ENCODE measurements at regions of chr22 and their contacts with region 1.

Region 1: DNA sequence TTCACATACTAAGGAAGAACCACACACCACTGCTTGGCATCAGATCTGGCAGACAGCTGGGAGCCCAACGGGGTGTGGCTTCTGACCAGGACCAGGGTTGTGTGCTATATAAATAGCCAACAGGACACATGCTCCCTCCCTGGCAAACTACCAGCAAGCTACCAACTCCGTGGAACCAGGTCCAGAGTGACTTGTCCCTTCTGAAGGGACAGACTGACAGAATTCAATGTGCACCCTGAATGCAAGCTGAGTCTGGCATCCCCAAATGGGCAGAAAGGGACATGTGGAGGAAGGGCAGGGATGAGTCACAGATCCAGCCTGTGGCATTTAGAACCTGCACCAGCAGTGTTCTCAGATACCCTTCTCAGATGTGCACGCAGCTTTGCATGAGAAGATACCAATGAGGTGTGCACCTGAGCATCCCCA is 92.9 kb downstream of the MICAL3 start:
- DNase-seq: peak in 1 of 2 donors; percentile 71
- H3K4me3 ChIP-seq: no peak overlapping the region
- H3K27ac ChIP-seq: no peak overlapping the region
- H3K4me1 ChIP-seq: no peaks in the 10 kb centered on the region
- H3K27me3 ChIP-seq: no peaks in the 10 kb centered on the region
- CTCF ChIP-seq: no peak
- POLR2A ChIP-seq: no peak

Region 2: DNA sequence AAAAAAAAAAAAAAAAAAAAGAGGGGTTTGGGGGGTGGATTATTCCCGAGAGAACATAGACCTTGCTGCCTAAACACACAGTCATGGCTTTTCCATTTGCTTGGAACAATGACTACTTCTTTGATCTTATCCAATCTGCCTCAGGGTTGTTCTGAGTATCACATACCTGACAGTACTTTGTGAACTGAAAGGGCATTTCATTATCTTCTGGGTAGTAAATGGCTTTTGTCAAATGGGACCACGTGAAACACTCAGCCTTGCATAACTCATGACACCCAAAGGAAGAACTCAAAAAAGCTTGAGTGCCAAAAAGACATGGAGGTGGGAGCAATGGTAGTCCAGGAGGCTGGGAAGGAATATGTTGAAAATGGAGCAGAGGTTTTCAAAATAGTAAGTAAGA is 34.0 kb before region 1 on chr22:
- intact Hi-C with region 1: loop called (anchors 2 kb)
- DNase-seq: no peak
- H3K4me3 ChIP-seq: no peak overlapping the region
- H3K27ac ChIP-seq: no peak overlapping the region
- H3K4me1 ChIP-seq: peaks cover 0 to 4% of the 10 kb centered on the region in 2 donors
- H3K27me3 ChIP-seq: no peaks in the 10 kb centered on the region
- CTCF ChIP-seq: no peak
- POLR2A ChIP-seq: no peak

Region 3: DNA sequence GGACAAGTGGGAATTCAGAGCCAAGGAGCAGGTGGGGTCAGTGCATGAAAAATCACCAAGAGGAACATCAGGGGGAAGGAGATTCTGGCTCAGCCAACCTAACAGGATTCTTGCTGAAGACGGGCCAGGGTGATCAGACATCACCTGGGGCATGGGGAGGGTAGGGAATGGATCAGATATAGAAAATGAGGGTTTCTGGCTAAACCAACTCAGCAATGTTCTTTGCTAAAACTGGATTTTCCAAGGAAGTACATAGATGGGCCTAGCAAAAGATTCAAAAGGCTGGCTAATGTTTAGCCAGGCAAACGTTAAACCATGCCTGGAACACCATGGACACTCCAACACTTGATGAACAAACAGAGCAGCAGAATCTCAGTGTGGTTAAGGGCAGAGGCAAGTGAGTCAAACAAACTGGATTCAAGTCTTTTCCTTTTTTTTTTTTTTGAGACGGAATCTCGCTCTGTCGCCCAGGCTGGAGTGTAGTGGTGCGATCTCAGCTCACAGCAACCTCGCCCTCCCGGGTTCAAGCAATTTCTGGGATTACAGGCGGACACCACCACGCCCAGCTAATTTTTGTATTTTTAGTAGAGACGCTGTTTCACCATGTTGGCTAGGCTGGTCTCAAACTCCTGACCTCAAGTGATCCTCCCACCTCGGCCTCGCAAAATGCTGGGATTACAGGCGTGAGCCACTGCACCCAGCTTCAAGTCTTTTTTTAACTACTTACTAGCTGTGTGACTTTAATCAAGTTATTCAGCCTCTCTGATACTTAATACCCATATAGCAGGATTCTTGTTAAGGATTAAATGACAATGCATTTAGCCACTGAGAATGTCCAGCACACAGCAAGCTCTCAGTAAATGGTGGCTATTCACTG is 23.1 kb after region 1 on chr22:
- intact Hi-C with region 1: no loop called
- DNase-seq: no peak
- H3K4me3 ChIP-seq: no peak overlapping the region
- H3K27ac ChIP-seq: no peak overlapping the region
- H3K4me1 ChIP-seq: no peaks in the 10 kb centered on the region
- H3K27me3 ChIP-seq: no peaks in the 10 kb centered on the region
- CTCF ChIP-seq: no peak
- POLR2A ChIP-seq: no peak

Region 4: GRCh38 chr22:18044548-18045271 is 113.3 kb after region 1 on chr22:
- intact Hi-C with region 1: no loop called
- DNase-seq: no peak
- H3K4me3 ChIP-seq: no peak overlapping the region
- H3K27ac ChIP-seq: peak overlapping the region; percentile 53 to 57
- H3K4me1 ChIP-seq: no peaks in the 10 kb centered on the region
- H3K27me3 ChIP-seq: no peaks in the 10 kb centered on the region
- CTCF ChIP-seq: no peak
- POLR2A ChIP-seq: no peak